Activated CD4-positive, alpha-beta T cell treated with anti-CD3 and anti-CD28 coated beads for 36 hours (primary cell): ENCODE measurements at regions of chr2 and their contacts with region 1.

Region 1: DNA sequence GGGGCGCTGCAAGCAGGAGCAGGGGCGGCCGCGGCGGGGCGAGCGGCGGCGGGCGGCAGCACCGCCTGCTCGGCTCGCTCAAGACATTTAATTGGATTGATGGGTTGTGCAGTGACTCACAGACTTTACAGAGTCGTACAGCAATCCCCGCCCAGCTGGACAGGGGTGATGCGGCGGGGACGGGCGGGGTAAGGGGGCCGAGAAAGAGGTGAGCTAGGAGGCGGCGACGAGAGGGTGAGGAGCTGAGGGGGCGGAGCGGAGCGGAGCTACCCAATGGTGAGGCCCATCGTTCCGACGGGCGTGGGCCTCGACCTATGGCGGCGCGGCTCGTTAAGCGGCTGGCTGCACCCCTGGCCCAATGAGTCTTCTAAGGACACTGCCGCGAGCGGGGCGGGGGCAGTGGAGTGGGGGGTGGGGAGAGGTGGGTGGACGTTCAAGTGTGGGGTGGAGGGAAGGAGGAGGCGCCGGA is 97.1 kb upstream of the SERTAD2 start:
- DNase-seq: peak; percentile 99
- ATAC-seq: peak; percentile 90
- H3K4me3 Mint-ChIP-seq: peak overlapping the region; percentile 92
- H3K27ac Mint-ChIP-seq: peak overlapping the region; percentile 92
- H3K4me1 Mint-ChIP-seq: peaks cover 24% of the 10 kb centered on the region
- H3K27me3 Mint-ChIP-seq: no peaks in the 10 kb centered on the region

Region 2: DNA sequence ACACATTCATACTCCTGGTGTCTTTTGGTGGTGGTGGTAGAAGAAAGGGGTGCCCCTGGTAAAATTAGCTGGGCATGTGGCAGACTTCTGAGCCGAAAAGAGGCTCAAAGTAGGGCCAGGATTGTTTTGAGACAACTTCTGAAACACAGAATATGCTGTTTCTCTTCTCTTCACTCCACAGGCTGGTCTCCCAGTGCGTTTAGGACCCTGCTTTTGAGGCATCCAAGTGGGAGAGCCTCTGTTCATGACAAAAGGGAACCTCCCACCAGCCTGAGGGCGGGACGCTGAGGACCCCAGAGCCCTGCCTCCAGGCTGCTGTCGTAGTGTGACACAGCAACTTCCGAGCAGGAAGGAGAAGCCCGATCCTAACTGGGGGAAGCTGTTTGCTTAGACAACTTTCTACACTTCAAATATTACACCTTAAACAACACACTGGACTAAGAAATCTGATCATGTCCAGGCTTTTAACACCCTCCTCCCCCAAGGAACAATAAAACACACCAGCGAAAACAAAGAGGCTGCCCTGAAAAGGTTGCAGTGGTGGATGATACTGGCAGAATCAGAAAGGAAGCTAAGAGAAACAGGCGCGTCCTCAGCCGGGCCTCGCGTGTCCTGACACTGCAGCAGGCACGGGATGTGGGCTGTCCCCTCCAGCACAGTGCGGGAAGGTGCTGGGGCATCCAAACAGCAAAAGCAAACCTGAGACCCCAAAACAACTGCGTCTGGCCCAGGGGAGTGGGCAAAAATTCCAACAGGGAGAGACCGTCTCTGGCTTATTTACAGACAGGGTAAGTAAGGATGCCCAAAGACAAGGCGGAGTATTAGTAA is 106.5 kb before region 1 on chr2:
- CTCF ChIA-PET with region 1: interaction called, 12 read pairs
- POLR2A ChIA-PET with region 1: interaction called, 6 read pairs
- intact Hi-C with region 1: loop called in 1 of 2 experiments (anchors 2 kb)
- DNase-seq: peak; percentile 72
- ATAC-seq: peak; percentile 73
- H3K4me3 Mint-ChIP-seq: peak overlapping the region; percentile 74
- H3K27ac Mint-ChIP-seq: peak overlapping the region; percentile 94
- H3K4me1 Mint-ChIP-seq: peaks cover 82% of the 10 kb centered on the region
- H3K27me3 Mint-ChIP-seq: no peaks in the 10 kb centered on the region

Region 3: GRCh38 chr2:64730551-64731262 is 20.1 kb before region 1 on chr2:
- CTCF ChIA-PET with region 1: interaction called, 3 read pairs
- POLR2A ChIA-PET with region 1: no interaction called
- intact Hi-C with region 1: loop called in 1 of 2 experiments (anchors 2 kb)
- DNase-seq: peak; percentile 54
- ATAC-seq: peak; percentile 68
- H3K4me3 Mint-ChIP-seq: peak overlapping the region; percentile 74
- H3K27ac Mint-ChIP-seq: peak overlapping the region; percentile 96
- H3K4me1 Mint-ChIP-seq: peaks cover 61% of the 10 kb centered on the region
- H3K27me3 Mint-ChIP-seq: no peaks in the 10 kb centered on the region

Region 4: GRCh38 chr2:64807417-64807816 is 56.6 kb after region 1 on chr2:
- CTCF ChIA-PET with region 1: no interaction called
- POLR2A ChIA-PET with region 1: no interaction called
- intact Hi-C with region 1: loop called in 1 of 2 experiments (anchors 2 kb)
- DNase-seq: peak; percentile 84
- ATAC-seq: peak; percentile 99
- H3K4me3 Mint-ChIP-seq: no peak overlapping the region
- H3K27ac Mint-ChIP-seq: peak overlapping the region; percentile 20
- H3K4me1 Mint-ChIP-seq: peaks cover 29% of the 10 kb centered on the region
- H3K27me3 Mint-ChIP-seq: no peaks in the 10 kb centered on the region

Region 5: GRCh38 chr2:64865073-64865830 is 114.4 kb after region 1 on chr2:
- CTCF ChIA-PET with region 1: interaction called, 4 read pairs
- POLR2A ChIA-PET with region 1: no interaction called
- intact Hi-C with region 1: loop called (anchors 1 to 5 kb)
- DNase-seq: peak; percentile 78
- ATAC-seq: peak; percentile 74
- H3K4me3 Mint-ChIP-seq: peak overlapping the region; percentile 52
- H3K27ac Mint-ChIP-seq: no peak overlapping the region
- H3K4me1 Mint-ChIP-seq: no peaks in the 10 kb centered on the region
- H3K27me3 Mint-ChIP-seq: peaks cover 6% of the 10 kb centered on the region

Region 6: GRCh38 chr2:65227425-65228262 is 476.8 kb after region 1 on chr2 and contains the start of gene ACTR2:
- CTCF ChIA-PET with region 1: no interaction called
- POLR2A ChIA-PET with region 1: interaction called, 3 read pairs
- intact Hi-C with region 1: loop called in 1 of 2 experiments (anchors 5 kb)
- DNase-seq: peak; percentile 97
- ATAC-seq: peak; percentile 96
- H3K4me3 Mint-ChIP-seq: peak within 1 kb of the TSS; percentile 95
- H3K27ac Mint-ChIP-seq: peak within 1 kb of the TSS; percentile 98
- H3K4me1 Mint-ChIP-seq: peaks cover 30% of the 10 kb centered on the region
- H3K27me3 Mint-ChIP-seq: no peaks in the 10 kb centered on the region
- total RNA-seq, gene ACTR2: 326 to 388 TPM